ENCODE measurements at regions of chr20 and their contacts with region 1.

Region 1: GRCh38 chr20:5788385-5788895 is 38.2 kb downstream of the SHLD1 start:
- DNase-seq: peak; percentile 87
- ATAC-seq: peak; percentile 99
- H3K4me3 Mint-ChIP-seq: no peak overlapping the region
- H3K27ac Mint-ChIP-seq: no peak overlapping the region
- H3K4me1 Mint-ChIP-seq: peaks cover 11% of the 10 kb centered on the region
- H3K27me3 Mint-ChIP-seq: no peaks in the 10 kb centered on the region

Region 2: DNA sequence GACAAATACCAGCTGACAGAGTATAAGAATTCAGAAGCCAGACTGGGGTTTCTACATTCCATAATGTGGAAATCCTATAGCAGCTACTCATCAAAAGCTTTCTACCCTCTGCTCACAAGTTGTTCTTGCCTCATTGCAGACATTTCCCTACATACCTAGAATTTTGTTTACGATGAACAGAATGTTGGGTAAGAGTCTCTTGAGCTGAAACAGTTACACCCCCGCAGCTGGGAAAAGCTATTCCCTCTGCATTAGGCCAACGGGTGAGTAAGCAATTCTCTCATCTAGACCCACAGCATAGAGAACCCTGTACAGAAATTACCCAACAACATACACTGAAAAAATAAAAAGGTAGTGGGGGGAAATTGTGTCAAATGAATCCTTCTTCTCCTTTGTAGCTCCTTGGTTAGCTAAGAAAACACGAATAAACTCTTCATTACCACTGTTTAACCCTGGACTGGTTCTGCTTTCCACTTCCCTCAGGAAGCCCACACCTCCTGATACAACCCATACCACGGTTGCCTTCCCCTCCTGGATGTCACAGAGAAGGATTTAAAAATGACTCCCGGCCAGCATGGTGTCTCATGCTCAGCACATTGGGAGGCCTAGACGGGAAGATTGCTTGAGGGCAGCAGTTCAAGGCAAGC is 253.2 kb before region 1 on chr20:
- CTCF ChIA-PET with region 1: interaction called, 118 read pairs
- POLR2A ChIA-PET with region 1: no interaction called
- intact Hi-C with region 1: no loop called
- DNase-seq: no peak
- ATAC-seq: peak; percentile 58
- H3K4me3 Mint-ChIP-seq: no peak overlapping the region
- H3K27ac Mint-ChIP-seq: peak overlapping the region; percentile 1
- H3K4me1 Mint-ChIP-seq: peaks cover 21% of the 10 kb centered on the region
- H3K27me3 Mint-ChIP-seq: no peaks in the 10 kb centered on the region

Region 3: DNA sequence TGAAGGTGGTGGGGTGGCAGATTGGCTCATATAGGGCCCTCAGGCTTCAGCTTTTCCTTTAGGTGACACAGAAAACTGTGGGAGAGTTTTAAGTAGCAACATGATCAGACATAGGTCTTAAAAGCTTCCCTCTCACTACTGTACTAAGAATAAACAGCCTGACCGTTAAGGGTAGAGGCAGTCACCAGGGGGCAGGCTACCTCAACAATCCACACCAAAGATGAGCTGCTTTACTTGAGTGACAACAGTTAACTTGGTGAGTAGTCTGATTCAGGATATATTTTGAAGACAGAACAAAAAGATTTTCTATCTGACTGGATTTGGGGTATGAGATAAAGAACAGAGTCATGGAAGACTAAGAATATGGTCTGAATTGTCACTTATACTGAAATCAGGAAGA is 231.3 kb before region 1 on chr20:
- CTCF ChIA-PET with region 1: interaction called, 80 read pairs
- POLR2A ChIA-PET with region 1: interaction called, 4 read pairs
- intact Hi-C with region 1: loop called (anchors 1 kb)
- DNase-seq: peak; percentile 77
- ATAC-seq: peak; percentile 90
- H3K4me3 Mint-ChIP-seq: no peak overlapping the region
- H3K27ac Mint-ChIP-seq: peak overlapping the region; percentile 51
- H3K4me1 Mint-ChIP-seq: peaks cover 2% of the 10 kb centered on the region
- H3K27me3 Mint-ChIP-seq: no peaks in the 10 kb centered on the region

Region 4: GRCh38 chr20:5596401-5597193 is 191.8 kb before region 1 on chr20:
- CTCF ChIA-PET with region 1: interaction called, 15 read pairs
- POLR2A ChIA-PET with region 1: no interaction called
- intact Hi-C with region 1: no loop called
- DNase-seq: no peak
- ATAC-seq: no peak
- H3K4me3 Mint-ChIP-seq: no peak overlapping the region
- H3K27ac Mint-ChIP-seq: peak overlapping the region; percentile 37
- H3K4me1 Mint-ChIP-seq: peaks cover 62% of the 10 kb centered on the region
- H3K27me3 Mint-ChIP-seq: no peaks in the 10 kb centered on the region

Region 5: DNA sequence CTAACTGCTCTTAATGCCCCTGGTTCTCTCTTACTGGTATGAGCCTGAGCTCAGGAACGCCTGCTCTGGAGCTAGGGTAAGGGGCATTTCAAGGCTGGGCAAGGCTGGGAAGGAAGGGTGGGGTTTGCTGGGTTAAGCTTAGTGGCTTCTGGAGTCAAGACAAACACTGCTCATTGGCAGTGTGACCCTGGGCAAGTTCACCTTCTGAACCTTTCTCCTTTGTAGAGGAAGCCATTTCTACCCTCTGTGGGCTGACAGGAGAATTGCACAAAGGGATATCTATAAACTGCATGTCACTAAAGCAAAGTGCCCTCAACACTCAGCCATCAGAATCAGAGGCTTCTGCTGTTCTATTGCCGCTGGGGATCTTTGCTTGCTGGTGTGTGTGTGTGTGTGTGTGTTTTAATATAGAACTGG is 285.7 kb after region 1 on chr20:
- CTCF ChIA-PET with region 1: interaction called, 6 read pairs
- POLR2A ChIA-PET with region 1: no interaction called
- intact Hi-C with region 1: loop called in 1 of 2 experiments (anchors 1 kb)
- DNase-seq: peak; percentile 13
- ATAC-seq: peak; percentile 74
- H3K4me3 Mint-ChIP-seq: no peak overlapping the region
- H3K27ac Mint-ChIP-seq: no peak overlapping the region
- H3K4me1 Mint-ChIP-seq: no peaks in the 10 kb centered on the region
- H3K27me3 Mint-ChIP-seq: peaks cover 2% of the 10 kb centered on the region

Region 6: DNA sequence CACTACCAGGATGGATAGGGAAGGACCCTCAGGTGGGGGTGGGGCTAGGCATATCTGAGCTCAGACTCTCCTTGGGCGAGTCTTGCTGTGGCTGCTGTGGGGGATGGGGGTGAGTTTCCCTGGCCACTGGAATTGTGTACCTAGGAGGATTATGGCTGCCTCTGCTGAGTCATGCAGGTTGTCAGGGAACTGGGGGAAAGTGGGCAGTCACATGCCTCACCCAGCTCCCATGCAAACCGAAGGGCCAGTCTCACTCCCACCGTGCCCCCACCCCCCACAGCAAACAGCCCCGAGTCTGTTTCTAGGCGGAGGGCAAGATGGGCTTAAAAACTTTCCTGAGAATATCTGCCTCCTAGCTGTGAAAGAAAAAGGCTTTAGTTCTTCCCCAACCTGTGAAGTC is 544.7 kb after region 1 on chr20:
- CTCF ChIA-PET with region 1: no interaction called
- POLR2A ChIA-PET with region 1: no interaction called
- intact Hi-C with region 1: no loop called
- DNase-seq: no peak
- ATAC-seq: no peak
- H3K4me3 Mint-ChIP-seq: no peak overlapping the region
- H3K27ac Mint-ChIP-seq: no peak overlapping the region
- H3K4me1 Mint-ChIP-seq: no peaks in the 10 kb centered on the region
- H3K27me3 Mint-ChIP-seq: no peaks in the 10 kb centered on the region